PC-3 (cell line): ENCODE measurements at regions of chr13 and their contacts with region 1.

Region 1: DNA sequence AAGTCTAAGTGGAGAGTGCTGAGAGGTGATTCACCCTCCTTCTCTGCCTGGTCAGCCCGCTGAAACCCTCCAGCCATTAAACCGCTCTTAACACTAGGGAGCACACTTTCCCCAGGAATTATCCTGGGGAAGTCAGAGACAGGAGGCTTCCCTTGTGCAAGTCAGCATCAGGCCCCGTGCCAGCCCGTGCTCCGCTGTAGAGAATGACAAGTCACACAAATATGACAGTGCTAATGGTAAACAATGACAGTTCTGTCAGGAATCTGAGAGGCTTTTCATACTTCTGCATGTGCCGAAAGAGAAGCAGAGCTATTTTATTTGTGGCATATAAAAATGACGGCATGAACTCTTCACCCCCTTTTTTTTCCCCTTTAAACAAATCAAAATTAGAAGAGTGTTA is 816.9 kb upstream of the SLC10A2 start:
- DNase-seq: peak; percentile 97
- ATAC-seq: peak; percentile 94
- H3K4me3 ChIP-seq: peak overlapping the region; percentile 46
- H3K27ac ChIP-seq: no peak overlapping the region
- H3K4me1 ChIP-seq: peaks cover 9% of the 10 kb centered on the region
- H3K27me3 ChIP-seq: no peaks in the 10 kb centered on the region
- CTCF ChIP-seq: peak; percentile 70

Region 2: GRCh38 chr13:103188713-103189326 is 694.3 kb before region 1 on chr13:
- CTCF ChIA-PET with region 1: no interaction called
- POLR2A ChIA-PET with region 1: no interaction called
- intact Hi-C with region 1: loop called (anchors 2 kb)
- DNase-seq: peak; percentile 48
- ATAC-seq: peak; percentile 24; the same call in 1 of the 2 replicates
- H3K4me3 ChIP-seq: no peak overlapping the region
- H3K27ac ChIP-seq: 0 out of 2 replicates have a peak overlapping the region, but pooled peaks have one; percentile 11
- H3K4me1 ChIP-seq: no peaks in the 10 kb centered on the region
- H3K27me3 ChIP-seq: no peaks in the 10 kb centered on the region
- CTCF ChIP-seq: peak; percentile 72

Region 3: DNA sequence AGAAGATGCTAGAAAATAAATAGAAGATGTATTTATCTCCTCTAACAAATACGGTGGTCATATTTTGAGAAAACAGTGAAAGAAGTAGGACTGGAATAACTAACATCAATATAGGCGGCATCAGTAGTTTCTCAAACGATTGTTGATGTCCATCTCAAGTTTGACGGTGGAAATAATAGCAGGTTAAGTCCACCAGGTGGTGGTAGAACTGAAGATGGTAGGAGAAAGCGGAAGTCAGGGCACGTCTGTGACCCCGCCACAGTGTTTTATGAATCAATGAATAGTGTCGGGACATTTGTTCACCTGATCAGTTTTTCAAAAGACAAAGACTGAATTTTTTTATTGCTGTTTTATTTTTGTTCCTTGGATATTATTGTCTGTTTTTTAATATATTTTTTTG is 110.6 kb before region 1 on chr13:
- CTCF ChIA-PET with region 1: no interaction called
- POLR2A ChIA-PET with region 1: no interaction called
- intact Hi-C with region 1: no loop called
- DNase-seq: peak; percentile 30
- ATAC-seq: no peak
- H3K4me3 ChIP-seq: no peak overlapping the region
- H3K27ac ChIP-seq: no peak overlapping the region
- H3K4me1 ChIP-seq: no peaks in the 10 kb centered on the region
- H3K27me3 ChIP-seq: no peaks in the 10 kb centered on the region
- CTCF ChIP-seq: peak; percentile 49

Region 4: DNA sequence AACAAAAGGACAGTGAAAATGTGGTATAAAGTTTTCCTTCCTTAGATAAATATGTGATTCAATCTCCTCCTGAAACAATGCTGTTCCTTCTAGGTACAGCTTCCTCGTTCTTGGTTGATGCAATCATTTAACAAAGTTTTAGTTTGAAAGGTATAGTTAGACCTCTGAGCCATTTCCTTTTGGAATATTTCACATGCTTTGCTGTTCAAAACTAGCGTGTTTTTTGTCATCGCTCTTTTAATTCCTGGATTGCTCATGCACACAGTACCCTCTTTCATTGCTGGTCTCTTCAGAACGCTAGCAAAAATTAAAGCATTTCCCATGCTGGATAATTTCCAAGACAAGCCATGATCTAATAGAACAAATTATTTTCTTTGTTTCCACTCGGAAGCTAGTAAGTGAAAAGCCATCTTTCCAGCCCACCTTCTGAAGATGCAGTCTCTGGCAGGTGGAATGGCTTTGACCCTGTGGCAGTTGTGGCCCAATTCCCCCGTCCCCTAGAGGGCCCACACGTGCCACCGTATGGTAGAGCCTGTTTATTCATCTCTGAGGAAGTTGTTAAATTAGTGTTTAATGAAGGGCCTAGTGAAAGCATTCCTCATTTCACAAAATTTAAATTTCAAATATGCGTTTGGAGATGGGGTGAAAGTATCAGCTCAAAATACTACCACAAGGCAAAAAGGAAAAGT is 223.7 kb after region 1 on chr13:
- CTCF ChIA-PET with region 1: no interaction called
- POLR2A ChIA-PET with region 1: no interaction called
- intact Hi-C with region 1: loop called (anchors 5 kb)
- DNase-seq: peak; percentile 57
- ATAC-seq: peak; percentile 88
- H3K4me3 ChIP-seq: no peak overlapping the region
- H3K27ac ChIP-seq: peak overlapping the region; percentile 50
- H3K4me1 ChIP-seq: peaks cover 18% of the 10 kb centered on the region; the same call in 1 of the 2 replicates
- H3K27me3 ChIP-seq: no peaks in the 10 kb centered on the region
- CTCF ChIP-seq: peak; percentile 33

Region 5: GRCh38 chr13:104318121-104318520 is 435.0 kb after region 1 on chr13:
- CTCF ChIA-PET with region 1: interaction called, 3 read pairs
- POLR2A ChIA-PET with region 1: no interaction called
- intact Hi-C with region 1: loop called (anchors 1 kb)
- DNase-seq: peak; percentile 38
- ATAC-seq: peak; percentile 55
- H3K4me3 ChIP-seq: no peak overlapping the region
- H3K27ac ChIP-seq: no peak overlapping the region
- H3K4me1 ChIP-seq: peaks cover 25% of the 10 kb centered on the region
- H3K27me3 ChIP-seq: no peaks in the 10 kb centered on the region
- CTCF ChIP-seq: peak; percentile 69

Region 6: DNA sequence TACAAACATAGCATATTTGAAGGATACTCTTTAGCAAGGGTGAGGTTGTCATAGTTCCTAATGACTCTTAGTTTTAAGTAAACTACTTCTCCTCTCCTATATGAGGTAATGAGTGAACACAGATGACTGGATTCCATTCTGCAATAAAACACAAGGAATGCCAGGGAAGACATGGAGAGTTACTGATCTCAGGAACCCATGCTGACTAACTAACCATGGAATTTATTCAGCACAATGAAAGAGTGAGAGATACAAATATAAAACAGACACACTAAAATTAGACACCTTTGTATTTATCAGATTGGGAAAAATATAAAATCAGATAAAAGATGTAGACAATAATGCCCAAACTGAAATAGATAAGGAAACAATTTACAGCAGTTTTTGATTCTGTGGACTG is 709.0 kb after region 1 on chr13:
- CTCF ChIA-PET with region 1: no interaction called
- POLR2A ChIA-PET with region 1: no interaction called
- intact Hi-C with region 1: loop called (anchors 5 kb)
- DNase-seq: peak; percentile 66
- ATAC-seq: peak; percentile 94
- H3K4me3 ChIP-seq: no peak overlapping the region
- H3K27ac ChIP-seq: peak overlapping the region; percentile 26; the same call in 1 of the 2 replicates
- H3K4me1 ChIP-seq: peaks cover 15% of the 10 kb centered on the region
- H3K27me3 ChIP-seq: no peaks in the 10 kb centered on the region
- CTCF ChIP-seq: no peak

Region 7: GRCh38 chr13:105202354-105202753 is 1319.2 kb after region 1 on chr13:
- CTCF ChIA-PET with region 1: no interaction called
- POLR2A ChIA-PET with region 1: no interaction called
- intact Hi-C with region 1: loop called (anchors 10 kb)
- DNase-seq: peak; percentile 43
- ATAC-seq: peak; percentile 66
- H3K4me3 ChIP-seq: no peak overlapping the region
- H3K27ac ChIP-seq: no peak overlapping the region
- H3K4me1 ChIP-seq: no peaks in the 10 kb centered on the region
- H3K27me3 ChIP-seq: no peaks in the 10 kb centered on the region
- CTCF ChIP-seq: peak; percentile 61